GM12878 (cell line): ENCODE measurements at regions of chr11 and their contacts with region 1.

Region 1: DNA sequence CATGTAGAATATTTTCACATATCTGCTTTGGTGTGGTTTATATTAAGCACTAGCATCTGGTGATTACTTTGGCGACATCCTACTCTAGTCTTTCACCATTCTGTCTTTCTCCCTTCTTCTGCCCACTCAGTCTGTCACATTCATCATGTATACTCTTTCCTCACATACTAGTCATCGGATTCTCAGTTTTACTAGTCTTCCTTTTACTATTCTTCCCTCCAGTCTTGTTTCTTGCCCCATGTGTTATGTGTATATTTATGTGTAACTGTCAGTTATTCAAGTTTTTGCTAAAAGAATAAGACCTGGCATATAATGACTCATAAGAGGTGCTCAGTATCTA is 4.6 kb upstream of the DIXDC1 start:
- DNase-seq: no peak
- ATAC-seq: no peak
- H3K4me3 ChIP-seq: no peak overlapping the region
- H3K27ac ChIP-seq: no peak overlapping the region
- H3K4me1 ChIP-seq: peaks cover 9% of the 10 kb centered on the region
- H3K27me3 ChIP-seq: 0 out of 4 replicates have a peak, but pooled peaks cover 0 to under 1% of the 10 kb centered on the region in 2 experiments
- CTCF ChIP-seq: no peak
- EP300 ChIP-seq: no peak
- POLR2A ChIP-seq: no peak
- RAD21 ChIP-seq: no peak

Region 2: DNA sequence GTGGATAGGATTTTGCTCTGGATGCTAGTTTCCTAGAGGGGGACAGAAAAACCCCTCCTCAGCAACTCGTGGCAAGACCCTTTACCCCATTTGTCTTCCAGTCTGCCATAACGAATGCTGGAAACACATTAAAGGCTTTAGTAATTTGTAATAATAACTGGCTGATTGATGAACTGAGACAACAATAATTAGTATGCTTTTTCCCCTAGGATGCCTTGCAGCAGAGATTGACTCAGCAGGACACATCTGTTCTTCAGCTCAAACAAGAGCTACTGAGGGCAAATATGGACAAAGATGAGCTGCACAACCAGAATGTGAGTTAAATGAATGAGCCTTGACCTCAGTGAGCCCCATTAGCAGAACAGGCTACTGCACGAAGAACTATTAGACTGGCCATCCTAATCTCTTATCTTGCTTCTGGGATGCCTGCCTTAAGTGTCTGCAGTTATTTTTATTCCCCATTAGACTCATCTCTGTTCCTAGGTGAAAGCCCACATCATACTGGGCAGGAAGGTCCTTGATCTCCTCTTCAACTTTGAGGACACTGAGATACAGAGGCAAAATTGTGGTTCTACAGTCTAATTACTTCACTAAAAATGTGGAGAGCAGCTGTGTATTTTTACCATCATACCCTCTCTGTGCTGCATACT is 59.8 kb after region 1 on chr11:
- CTCF ChIA-PET with region 1: interaction called, 23 read pairs
- POLR2A ChIA-PET with region 1: no interaction called
- RAD21 ChIA-PET with region 1: interaction called, 4 read pairs
- SMC1A ChIA-PET with region 1: interaction called, 3 read pairs
- in situ Hi-C with region 1: no loop called
- intact Hi-C with region 1: no loop called
- DNase-seq: no peak
- ATAC-seq: no peak
- H3K4me3 ChIP-seq: no peak overlapping the region
- H3K27ac ChIP-seq: no peak overlapping the region
- H3K4me1 ChIP-seq: no peaks in the 10 kb centered on the region
- H3K27me3 ChIP-seq: no peaks in the 10 kb centered on the region
- CTCF ChIP-seq: no peak
- EP300 ChIP-seq: no peak
- POLR2A ChIP-seq: no peak
- RAD21 ChIP-seq: no peak